Posterior cingulate gyrus (tissue), 11 donors: ENCODE measurements at regions of chr7 and their contacts with region 1.

Region 1: DNA sequence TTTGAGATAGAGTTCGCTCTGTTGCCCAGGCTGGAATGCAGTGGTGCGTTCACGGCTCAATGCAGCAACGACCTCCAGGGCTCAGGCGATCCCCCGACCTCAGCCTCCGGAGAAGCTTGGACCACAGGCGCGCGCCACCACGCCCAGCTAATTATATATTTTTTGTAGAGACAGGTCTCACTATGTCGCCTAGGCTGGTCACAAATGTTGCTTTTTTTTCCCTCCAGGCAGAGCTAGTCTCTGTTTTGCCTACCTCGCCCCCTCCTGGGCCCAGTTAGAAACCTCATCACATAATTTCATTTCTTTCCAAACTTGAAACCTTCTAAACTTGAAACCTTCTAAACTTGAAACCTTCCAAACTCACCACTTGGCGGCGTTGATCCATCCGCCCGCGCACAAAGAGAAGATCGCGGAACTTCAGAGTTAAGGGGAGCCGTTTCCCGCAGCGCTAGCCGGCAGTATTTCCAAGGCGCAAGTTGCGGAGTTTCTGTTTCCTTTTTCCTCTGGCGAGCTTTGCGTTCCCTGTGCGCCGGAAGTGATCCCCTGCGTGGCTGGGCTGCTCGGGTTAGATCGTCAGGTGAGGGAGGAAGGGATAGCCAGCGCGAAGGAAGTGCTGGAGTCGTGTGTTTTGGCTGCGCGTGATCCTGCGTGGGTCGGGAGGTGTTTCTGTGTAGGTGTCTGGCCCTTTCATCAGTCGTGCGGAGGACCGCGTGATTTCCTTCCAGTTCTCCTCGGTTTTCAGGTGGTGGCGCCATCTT is at the start of gene SSBP1:
- DNase-seq: peak; percentile 85 to 98 (median 90)

Region 2: DNA sequence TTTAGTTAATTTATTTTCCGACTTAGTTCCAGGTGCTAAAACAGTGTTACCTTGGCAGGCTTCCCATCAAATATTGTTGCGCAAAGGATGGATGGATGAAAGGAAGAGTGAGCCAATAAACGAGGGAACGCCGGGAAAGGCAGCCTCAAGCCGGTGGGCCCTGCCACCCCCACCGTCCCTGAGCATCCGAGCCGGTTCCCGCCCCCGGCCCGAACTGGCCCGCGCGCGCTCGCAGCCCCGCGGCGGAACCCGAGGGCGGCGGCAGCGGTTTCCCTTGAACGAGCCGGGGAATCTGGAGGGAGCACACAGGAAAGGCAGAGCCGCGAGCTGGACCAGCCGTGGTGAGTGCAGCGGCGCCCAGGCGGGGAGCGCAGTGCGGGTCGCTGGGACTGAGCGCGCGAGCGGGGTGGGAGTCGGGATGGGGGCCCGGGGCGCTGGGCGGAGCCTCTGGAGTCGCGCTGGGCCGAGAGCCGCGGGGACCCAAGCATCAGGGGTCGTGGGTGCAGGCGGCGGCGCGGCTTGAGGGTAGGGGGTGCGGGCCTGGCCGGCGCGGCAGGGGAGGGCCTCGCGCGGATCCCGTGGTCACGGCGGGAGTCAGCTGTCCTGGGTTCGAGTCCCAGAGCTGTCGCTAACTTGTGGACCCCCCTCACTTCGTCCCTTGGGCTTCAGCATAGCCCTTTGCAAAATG is 186.8 kb before region 1 on chr7 and contains the start of gene AGK:
- intact Hi-C with region 1: loop called (anchors 5 kb)
- DNase-seq: peak; percentile 59 to 96 (median 74)

Region 3: DNA sequence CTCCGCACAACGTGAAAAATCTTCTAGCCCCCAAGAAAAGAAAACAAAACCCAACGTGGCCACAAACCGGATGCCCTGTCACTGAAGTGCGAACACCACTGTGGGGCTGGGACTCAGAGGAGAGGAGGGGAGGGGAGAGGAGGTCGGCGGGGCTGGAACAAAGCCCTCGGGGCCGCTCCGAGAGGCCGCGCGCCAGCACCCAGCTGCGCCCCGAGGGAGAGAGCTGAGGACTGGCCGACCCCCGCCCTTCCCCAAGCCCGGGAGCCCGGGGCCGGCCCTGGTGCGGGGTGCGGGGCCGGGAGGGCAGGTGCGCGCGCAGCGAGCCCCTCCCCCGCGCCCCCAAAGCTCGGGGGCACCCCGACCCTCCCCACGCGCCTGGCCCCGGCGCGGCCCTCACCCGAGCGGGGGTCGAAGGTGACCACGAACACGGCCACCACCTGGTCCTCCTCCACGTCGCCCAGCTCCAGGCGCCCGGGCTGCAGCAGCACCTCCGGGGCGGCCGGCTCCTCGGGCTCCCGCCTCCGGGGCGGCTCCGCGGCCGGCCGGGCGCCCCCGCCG is 36.4 kb before region 1 on chr7:
- intact Hi-C with region 1: loop called (anchors 1 kb)
- DNase-seq: peak in 6 of 10 donors; percentile 19 to 88 (median 64)